ENCODE measurements at regions of chr1 and their contacts with region 1.

Region 1: GRCh38 chr1:165144757-165145397 is 211.6 kb downstream of the LMX1A start:
- DNase-seq: peak; percentile 81
- H3K4me3 Mint-ChIP-seq: no peak overlapping the region
- H3K27ac Mint-ChIP-seq: no peak overlapping the region
- H3K4me1 Mint-ChIP-seq: peaks cover 6% of the 10 kb centered on the region
- H3K27me3 Mint-ChIP-seq: peaks cover 52% of the 10 kb centered on the region
- CTCF ChIP-seq: peak; percentile 91

Region 2: GRCh38 chr1:163410073-163410999 is 1734.5 kb before region 1 on chr1:
- CTCF ChIA-PET with region 1: interaction called, 4 read pairs
- POLR2A ChIA-PET with region 1: no interaction called
- intact Hi-C with region 1: loop called (anchors 1 kb)
- DNase-seq: peak; percentile 75
- H3K4me3 Mint-ChIP-seq: peak overlapping the region; percentile 26
- H3K27ac Mint-ChIP-seq: no peak overlapping the region
- H3K4me1 Mint-ChIP-seq: peaks cover 8% of the 10 kb centered on the region
- H3K27me3 Mint-ChIP-seq: peaks cover 8% of the 10 kb centered on the region
- CTCF ChIP-seq: peak; percentile 91

Region 3: DNA sequence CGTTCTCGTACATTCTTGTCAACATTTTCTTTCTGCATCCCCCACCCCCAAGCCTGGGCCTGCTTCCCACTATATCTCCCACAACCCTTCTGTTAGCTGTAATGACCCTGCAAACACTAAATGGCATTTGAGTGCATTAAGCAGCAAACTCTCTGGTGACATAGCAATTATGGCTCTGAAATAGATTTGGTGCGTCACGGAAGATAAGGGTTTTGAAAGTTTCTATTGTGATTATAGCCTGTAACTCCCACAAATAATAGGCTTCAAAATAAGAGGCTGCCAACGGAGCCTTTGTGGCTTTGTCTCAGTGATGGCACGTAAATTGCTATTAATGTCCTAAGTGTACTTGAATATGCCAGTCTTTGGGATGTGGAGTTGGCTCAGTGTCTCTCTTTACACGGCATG is 308.3 kb before region 1 on chr1:
- CTCF ChIA-PET with region 1: no interaction called
- POLR2A ChIA-PET with region 1: no interaction called
- intact Hi-C with region 1: no loop called
- DNase-seq: no peak
- H3K4me3 Mint-ChIP-seq: no peak overlapping the region
- H3K27ac Mint-ChIP-seq: no peak overlapping the region
- H3K4me1 Mint-ChIP-seq: no peaks in the 10 kb centered on the region
- H3K27me3 Mint-ChIP-seq: no peaks in the 10 kb centered on the region
- CTCF ChIP-seq: no peak

Region 4: DNA sequence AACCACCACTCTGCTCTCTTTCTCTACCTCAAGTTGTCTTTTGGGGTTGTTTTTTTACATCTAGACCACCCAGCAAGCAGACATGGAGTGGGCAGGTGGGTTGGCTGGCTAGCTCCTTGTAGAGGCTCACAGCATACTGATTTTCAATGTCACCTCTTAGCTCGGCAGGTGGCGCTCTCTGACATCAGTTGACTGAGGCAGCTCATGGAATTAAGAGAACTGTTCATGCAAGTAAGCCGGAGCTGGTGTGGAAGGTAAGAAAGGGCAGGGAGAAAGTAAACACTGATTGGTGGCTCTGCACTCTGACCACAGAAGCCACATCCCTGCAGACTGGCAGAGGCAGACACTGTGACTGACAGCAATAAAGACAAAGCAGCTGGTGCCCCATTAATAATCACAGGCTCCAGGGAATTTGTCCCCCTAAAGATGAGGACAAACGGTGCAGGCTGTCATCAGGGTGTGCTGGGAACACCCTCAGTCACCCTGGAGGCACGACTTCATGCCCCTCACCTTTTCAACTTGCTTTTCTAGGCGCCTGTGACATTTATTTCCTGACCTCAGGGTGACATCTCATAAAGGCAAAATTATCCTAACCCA is 15.2 kb before region 1 on chr1:
- CTCF ChIA-PET with region 1: interaction called, 160 read pairs
- POLR2A ChIA-PET with region 1: no interaction called
- intact Hi-C with region 1: loop called (anchors 1 kb)
- DNase-seq: peak; percentile 91
- H3K4me3 Mint-ChIP-seq: no peak overlapping the region
- H3K27ac Mint-ChIP-seq: no peak overlapping the region
- H3K4me1 Mint-ChIP-seq: peaks cover 5% of the 10 kb centered on the region
- H3K27me3 Mint-ChIP-seq: peaks cover 82% of the 10 kb centered on the region
- CTCF ChIP-seq: peak; percentile 79

Region 5: GRCh38 chr1:165174491-165174890 is 29.6 kb after region 1 on chr1:
- CTCF ChIA-PET with region 1: interaction called, 48 read pairs
- POLR2A ChIA-PET with region 1: interaction called, 3 read pairs
- intact Hi-C with region 1: no loop called
- DNase-seq: no peak
- H3K4me3 Mint-ChIP-seq: no peak overlapping the region
- H3K27ac Mint-ChIP-seq: no peak overlapping the region
- H3K4me1 Mint-ChIP-seq: no peaks in the 10 kb centered on the region
- H3K27me3 Mint-ChIP-seq: no peaks in the 10 kb centered on the region
- CTCF ChIP-seq: no peak

Region 6: DNA sequence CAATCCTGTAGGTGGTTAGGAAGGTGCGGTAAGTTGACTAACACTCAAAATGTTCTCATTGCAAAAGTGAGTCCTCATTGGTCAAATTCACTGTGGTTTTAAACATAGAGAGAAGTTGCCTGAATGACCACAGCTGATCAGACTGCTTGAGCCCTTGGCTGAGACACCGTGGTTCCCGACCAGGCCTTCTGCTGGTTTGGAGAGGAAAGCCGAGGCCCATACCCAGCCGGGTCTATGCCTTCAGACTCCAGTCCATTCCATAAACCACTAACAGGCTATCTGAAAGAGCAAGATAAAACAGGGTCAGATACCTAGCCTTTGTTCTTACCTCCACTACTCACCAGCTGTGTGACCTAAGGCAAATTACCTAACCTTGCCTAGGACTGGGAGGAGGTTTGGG is 77.7 kb after region 1 on chr1:
- CTCF ChIA-PET with region 1: interaction called, 24 read pairs
- POLR2A ChIA-PET with region 1: no interaction called
- intact Hi-C with region 1: no loop called
- DNase-seq: peak; percentile 15
- H3K4me3 Mint-ChIP-seq: no peak overlapping the region
- H3K27ac Mint-ChIP-seq: no peak overlapping the region
- H3K4me1 Mint-ChIP-seq: peaks cover 5% of the 10 kb centered on the region
- H3K27me3 Mint-ChIP-seq: no peaks in the 10 kb centered on the region
- CTCF ChIP-seq: no peak

Region 7: DNA sequence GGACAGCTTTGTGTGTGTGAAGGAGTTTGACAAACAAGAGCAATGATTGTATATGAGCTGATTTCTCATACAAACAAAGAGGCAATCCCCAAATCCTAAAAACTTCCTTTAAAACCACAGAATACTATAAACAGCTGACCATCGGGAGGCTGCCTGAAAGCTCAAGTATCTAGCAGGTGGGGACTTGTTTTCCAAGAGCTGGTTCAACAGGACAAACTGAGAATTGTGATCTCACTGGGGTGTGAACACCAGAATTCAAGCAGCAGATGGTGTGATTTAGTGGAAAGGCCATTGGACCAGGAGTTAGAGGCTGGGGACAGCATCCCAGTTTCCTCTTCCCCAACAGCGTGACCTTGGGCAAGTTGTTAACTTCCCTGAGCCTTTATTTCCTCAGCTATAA is 197.7 kb after region 1 on chr1:
- CTCF ChIA-PET with region 1: interaction called, 10 read pairs
- POLR2A ChIA-PET with region 1: no interaction called
- intact Hi-C with region 1: no loop called
- DNase-seq: no peak
- H3K4me3 Mint-ChIP-seq: no peak overlapping the region
- H3K27ac Mint-ChIP-seq: no peak overlapping the region
- H3K4me1 Mint-ChIP-seq: peaks cover 7% of the 10 kb centered on the region
- H3K27me3 Mint-ChIP-seq: peaks cover 54% of the 10 kb centered on the region
- CTCF ChIP-seq: no peak

Region 8: GRCh38 chr1:165392634-165393571 is 248.0 kb after region 1 on chr1:
- CTCF ChIA-PET with region 1: interaction called, 18 read pairs
- POLR2A ChIA-PET with region 1: no interaction called
- intact Hi-C with region 1: no loop called
- DNase-seq: peak; percentile 88
- H3K4me3 Mint-ChIP-seq: peak overlapping the region; percentile 47
- H3K27ac Mint-ChIP-seq: no peak overlapping the region
- H3K4me1 Mint-ChIP-seq: peaks cover 18% of the 10 kb centered on the region
- H3K27me3 Mint-ChIP-seq: peaks cover 83% of the 10 kb centered on the region
- CTCF ChIP-seq: peak; percentile 98